ENCODE measurements at regions of chr12 and their contacts with region 1.

Region 1: DNA sequence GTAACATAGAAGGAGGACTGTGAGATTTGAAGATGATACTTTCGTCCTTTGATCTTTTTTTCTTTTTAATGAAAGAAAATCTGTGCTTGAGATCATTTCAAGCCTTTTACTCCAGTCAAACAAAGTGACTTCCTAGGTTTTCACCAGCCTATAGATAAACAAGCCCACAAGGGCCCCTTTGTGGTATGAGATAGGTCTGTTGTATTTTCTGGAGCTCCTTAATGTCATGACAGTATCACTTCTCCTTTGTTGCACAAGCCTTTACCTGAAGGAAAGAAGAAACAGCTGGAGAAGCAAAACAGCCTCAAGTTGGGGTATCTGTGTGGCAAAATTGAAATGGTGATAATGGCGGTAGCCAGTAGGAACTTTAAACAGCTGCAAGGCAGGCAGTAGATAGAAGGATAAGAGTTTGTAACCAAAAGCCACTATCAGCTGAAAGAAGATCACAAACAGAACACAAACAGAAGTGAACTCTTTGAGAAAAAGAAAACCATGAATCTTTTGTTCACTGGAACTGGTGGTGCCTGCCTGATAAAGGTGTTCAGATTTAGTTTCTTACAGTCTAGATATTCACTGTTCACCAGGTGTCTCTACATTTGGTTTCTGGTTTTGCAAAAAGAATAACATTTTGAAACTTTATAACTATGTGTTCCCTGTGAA is 96.8 kb downstream of the LGR5 start:
- DNase-seq: no peak
- ATAC-seq: peak; percentile 61
- H3K4me3 ChIP-seq: no peak overlapping the region
- H3K27ac ChIP-seq: no peak overlapping the region
- H3K4me1 ChIP-seq: no peaks in the 10 kb centered on the region
- H3K27me3 ChIP-seq: no peaks in the 10 kb centered on the region
- CTCF ChIP-seq: no peak
- EP300 ChIP-seq: no peak
- POLR2A ChIP-seq: no peak
- RAD21 ChIP-seq: no peak

Region 2: DNA sequence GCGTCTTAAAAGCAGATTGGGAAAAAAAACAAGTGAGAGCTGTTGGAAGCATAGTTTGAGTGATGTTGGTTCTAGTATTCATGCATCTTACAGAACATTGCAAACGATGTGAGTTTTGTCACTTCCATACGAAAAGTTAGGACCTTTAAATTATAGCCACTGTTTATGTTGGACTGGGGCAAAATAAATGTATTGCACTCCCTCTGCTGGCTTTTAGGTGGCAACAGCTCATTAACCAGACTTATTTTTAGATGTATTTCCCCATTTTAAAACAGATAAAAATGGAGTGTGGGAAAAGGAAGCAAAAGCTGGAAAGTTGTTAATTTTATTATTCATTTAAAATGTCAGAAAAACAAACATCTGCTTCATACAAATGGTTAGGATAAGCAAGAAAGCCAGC is 15.1 kb after region 1 on chr12:
- CTCF ChIA-PET with region 1: interaction called, 5 read pairs
- POLR2A ChIA-PET with region 1: no interaction called
- RAD21 ChIA-PET with region 1: no interaction called
- SMC1A ChIA-PET with region 1: interaction called, 10 read pairs
- in situ Hi-C with region 1: no loop called
- intact Hi-C with region 1: no loop called
- DNase-seq: no peak
- ATAC-seq: peak; percentile 34; the same call in 2 of the 3 replicates
- H3K4me3 ChIP-seq: no peak overlapping the region
- H3K27ac ChIP-seq: no peak overlapping the region
- H3K4me1 ChIP-seq: no peaks in the 10 kb centered on the region
- H3K27me3 ChIP-seq: no peaks in the 10 kb centered on the region
- CTCF ChIP-seq: peak; percentile 8 to 40 (median 10); a peak in 2 of 6 replicates
- EP300 ChIP-seq: no peak
- POLR2A ChIP-seq: no peak
- RAD21 ChIP-seq: no peak